HCT116 (cell line): ENCODE measurements at regions of chr2 and their contacts with region 1.

Region 1: GRCh38 chr2:33033606-33034081 is 86.9 kb downstream of the LTBP1 start:
- DNase-seq: peak; percentile 10
- ATAC-seq: peak; percentile 67
- H3K4me3 ChIP-seq: no peak overlapping the region
- H3K27ac ChIP-seq: no peak overlapping the region
- H3K4me1 ChIP-seq: no peaks in the 10 kb centered on the region
- H3K27me3 ChIP-seq: no peaks in the 10 kb centered on the region
- CTCF ChIP-seq: peak; percentile 52 to 98 (median 60)
- POLR2A ChIP-seq: no peak
- RAD21 ChIP-seq: peak; percentile 89

Region 2: DNA sequence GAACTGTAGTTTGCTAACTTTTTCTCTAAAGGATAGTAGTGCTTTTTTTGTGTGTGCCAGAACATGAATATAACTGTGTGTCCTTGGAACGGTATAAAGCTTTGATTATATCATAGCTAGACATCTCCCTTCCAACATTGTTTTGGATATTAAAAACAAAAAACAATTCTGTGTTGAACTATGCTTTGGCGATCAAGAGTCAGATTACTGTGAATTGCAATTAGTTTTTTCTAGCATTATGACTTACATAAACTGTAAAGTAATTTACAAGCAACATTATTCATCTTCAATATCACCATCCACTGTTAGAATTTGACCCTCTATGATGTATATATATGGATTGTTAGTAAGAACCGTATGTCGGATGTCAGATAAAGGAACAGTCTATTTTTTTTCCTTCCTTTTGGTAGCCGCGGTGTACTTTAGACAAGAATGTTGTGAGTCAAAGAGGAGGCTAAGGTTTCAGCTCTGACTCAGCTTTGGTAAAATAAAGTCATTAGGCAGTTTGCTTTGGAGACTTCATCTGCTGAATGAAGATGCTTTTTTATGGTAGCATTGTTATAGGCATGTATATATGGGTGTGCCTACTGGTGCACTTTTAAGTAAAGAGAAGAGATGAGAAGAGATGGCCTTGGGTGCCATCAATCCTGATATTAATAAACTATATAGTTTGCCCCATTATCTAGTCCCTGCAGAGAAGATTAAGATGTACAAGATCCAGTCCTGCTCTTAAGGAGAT is 10.5 kb before region 1 on chr2:
- CTCF ChIA-PET with region 1: interaction called, 16 read pairs
- POLR2A ChIA-PET with region 1: interaction called, 3 read pairs
- RAD21 ChIA-PET with region 1: no interaction called
- intact Hi-C with region 1: no loop called
- DNase-seq: peak; percentile 22
- ATAC-seq: peak; percentile 77
- H3K4me3 ChIP-seq: no peak overlapping the region
- H3K27ac ChIP-seq: no peak overlapping the region
- H3K4me1 ChIP-seq: peaks cover 5 to 15% of the 10 kb centered on the region in 2 experiments; a peak in 2 of 4 replicates
- H3K27me3 ChIP-seq: no peaks in the 10 kb centered on the region
- CTCF ChIP-seq: no peak
- POLR2A ChIP-seq: no peak
- RAD21 ChIP-seq: no peak

Region 3: DNA sequence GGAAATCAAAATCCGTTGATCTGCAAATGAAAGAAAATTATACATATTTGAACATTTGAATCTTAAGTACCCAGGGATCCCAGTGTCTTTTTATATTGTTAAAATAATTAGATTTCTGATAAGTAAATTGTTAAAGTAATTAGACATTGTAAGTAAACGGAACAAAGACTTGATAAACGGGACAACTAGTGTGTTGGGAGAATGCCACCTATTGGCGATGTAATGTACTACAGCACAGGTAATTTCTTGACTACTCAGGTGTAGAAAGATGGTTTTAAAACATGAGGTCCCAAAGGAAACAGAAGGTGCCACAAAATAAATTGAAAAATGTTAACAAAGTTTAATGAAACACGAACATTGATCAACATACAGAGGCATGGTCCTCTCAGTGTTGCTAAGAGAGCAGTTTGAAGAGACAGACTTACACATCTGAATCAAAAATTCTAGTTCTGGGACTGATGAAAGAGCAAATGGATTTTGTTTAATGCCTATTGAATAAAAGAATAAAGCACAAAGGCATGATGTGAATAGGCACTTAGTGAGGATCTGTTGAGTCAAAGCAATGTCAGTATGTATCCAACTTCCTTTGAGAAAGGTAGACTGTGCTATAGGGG is 339.4 kb after region 1 on chr2:
- CTCF ChIA-PET with region 1: interaction called, 17 read pairs
- POLR2A ChIA-PET with region 1: no interaction called
- RAD21 ChIA-PET with region 1: no interaction called
- intact Hi-C with region 1: loop called (anchors 2 kb)
- DNase-seq: peak; percentile 47
- ATAC-seq: peak; percentile 79
- H3K4me3 ChIP-seq: no peak overlapping the region
- H3K27ac ChIP-seq: no peak overlapping the region
- H3K4me1 ChIP-seq: no peaks in the 10 kb centered on the region
- H3K27me3 ChIP-seq: no peaks in the 10 kb centered on the region
- CTCF ChIP-seq: peak; percentile 75 to 78 (median 77); a peak in 5 of 6 replicates
- POLR2A ChIP-seq: no peak
- RAD21 ChIP-seq: peak; percentile 79

Region 4: DNA sequence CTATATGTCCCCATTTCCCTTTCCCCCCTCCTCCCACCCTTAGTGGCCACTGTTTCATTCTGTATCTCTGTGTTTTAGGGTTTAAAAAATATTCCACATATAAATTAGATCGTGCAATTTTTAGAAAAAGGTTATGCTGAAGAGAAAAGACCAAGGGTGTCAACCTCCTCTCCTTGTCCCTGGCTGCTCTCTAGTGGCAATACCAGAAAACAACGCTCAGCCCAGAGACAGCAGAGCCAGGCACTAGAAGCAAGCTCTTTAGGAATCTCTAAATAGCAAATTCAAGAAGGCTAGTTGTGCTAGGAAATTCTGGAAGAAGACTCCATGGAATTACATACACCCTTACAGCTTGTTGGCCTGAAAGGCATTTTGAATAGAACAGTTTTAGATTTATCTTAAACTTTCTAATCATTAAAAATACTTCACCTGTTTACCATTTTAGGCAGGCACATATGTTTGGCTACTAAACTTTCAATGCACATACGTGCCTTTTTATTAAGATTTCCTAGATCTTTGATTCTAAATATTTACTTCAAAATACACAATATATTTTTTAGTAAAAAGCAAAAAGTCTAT is 407.7 kb after region 1 on chr2:
- CTCF ChIA-PET with region 1: no interaction called
- POLR2A ChIA-PET with region 1: no interaction called
- RAD21 ChIA-PET with region 1: interaction called in 1 of 2 experiments, 3 read pairs
- intact Hi-C with region 1: loop called (anchors 5 kb)
- DNase-seq: peak; percentile 34
- ATAC-seq: peak; percentile 98
- H3K4me3 ChIP-seq: no peak overlapping the region
- H3K27ac ChIP-seq: no peak overlapping the region
- H3K4me1 ChIP-seq: no peaks in the 10 kb centered on the region
- H3K27me3 ChIP-seq: no peaks in the 10 kb centered on the region
- CTCF ChIP-seq: peak; percentile 49 to 72 (median 62); a peak in 5 of 6 replicates
- POLR2A ChIP-seq: no peak
- RAD21 ChIP-seq: peak; percentile 75